Tibial artery (tissue), 4 donors: ENCODE measurements at regions of chr18 and their contacts with region 1.

Region 1: DNA sequence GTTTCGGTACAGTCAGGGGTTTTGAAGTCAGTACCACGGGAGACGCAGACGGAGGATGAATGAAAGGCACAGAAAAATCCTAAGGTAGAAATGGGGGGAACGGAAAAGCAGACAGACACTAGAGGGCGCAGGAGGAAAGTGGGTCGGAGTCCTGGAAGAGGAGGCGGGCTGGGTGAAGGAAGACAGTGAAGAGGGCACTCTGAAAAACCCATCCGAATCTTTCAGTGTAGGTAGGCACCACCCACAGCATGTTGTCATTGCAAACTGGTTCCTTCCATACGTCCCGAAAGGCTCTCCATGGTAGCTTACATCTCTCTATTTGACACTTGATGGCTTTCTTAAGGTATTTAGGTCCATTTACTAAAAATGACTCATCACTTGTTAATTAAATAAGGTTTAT is 18.5 kb upstream of the ZNF236 start:
- DNase-seq: peak; percentile 50 to 71
- H3K4me3 ChIP-seq: no peak overlapping the region
- H3K27ac ChIP-seq: no peak overlapping the region
- H3K4me1 ChIP-seq: peaks cover 0 to 17% (median 15%) of the 10 kb centered on the region in 4 donors
- H3K27me3 ChIP-seq: peaks cover 0 to 7% of the 10 kb centered on the region in 2 donors
- CTCF ChIP-seq: peak; percentile 65 to 77

Region 2: GRCh38 chr18:76565238-76566180 is 238.3 kb before region 1 on chr18:
- intact Hi-C with region 1: no loop called
- DNase-seq: peak; percentile 83 to 89
- H3K4me3 ChIP-seq: peak overlapping the region; percentile 44 to 45
- H3K27ac ChIP-seq: peak overlapping the region; percentile 55 to 68
- H3K4me1 ChIP-seq: peaks cover 0 to 22% (median 10%) of the 10 kb centered on the region in 4 donors
- H3K27me3 ChIP-seq: no peaks in the 10 kb centered on the region
- CTCF ChIP-seq: no peak

Region 3: DNA sequence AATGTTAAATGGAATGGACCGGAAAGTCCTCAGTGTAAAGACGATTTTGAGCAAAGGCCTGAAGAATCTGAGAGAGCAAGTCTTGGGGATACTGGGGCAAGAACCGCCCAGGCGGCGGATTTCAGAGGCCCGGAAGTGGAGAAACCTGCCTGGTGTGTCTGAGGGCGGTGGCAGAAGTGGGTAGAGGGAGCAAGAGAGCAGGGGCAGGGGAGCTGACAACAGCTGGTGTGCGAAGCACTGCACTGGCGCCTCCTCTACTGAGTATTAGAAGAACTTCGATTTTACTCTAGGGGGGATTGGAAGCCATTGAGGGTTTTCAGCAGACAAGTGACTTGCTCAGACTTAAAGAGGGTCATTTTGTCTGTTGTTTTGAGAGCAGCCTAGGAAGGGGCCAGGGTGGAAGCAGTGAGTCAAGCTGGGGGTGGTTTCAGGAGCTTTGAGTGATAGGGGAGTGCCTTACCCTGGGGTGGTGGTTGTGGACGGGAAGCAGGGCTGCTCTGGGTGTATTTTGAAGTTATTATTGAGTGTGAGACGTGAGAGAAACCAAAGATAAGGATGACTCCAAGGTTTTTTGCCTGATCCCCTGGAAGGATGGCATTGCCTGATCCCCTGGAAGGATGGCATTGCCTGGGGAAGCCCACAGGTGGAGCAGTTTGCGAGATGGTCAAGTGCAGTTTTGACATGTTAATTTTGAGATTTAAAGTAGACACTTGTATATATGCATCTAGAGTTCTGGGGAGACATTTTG is 71.0 kb after region 1 on chr18:
- intact Hi-C with region 1: loop called (anchors 5 kb)
- DNase-seq: no peak
- H3K4me3 ChIP-seq: no peak overlapping the region
- H3K27ac ChIP-seq: no peak overlapping the region
- H3K4me1 ChIP-seq: no peaks in the 10 kb centered on the region
- H3K27me3 ChIP-seq: no peaks in the 10 kb centered on the region
- CTCF ChIP-seq: no peak

Region 4: GRCh38 chr18:76982841-76983587 is 179.2 kb after region 1 on chr18:
- intact Hi-C with region 1: loop called (anchors 10 kb)
- DNase-seq: peak; percentile 63 to 81
- H3K4me3 ChIP-seq: no peak overlapping the region
- H3K27ac ChIP-seq: no peak overlapping the region
- H3K4me1 ChIP-seq: peaks cover 0 to 7% (median 0%) of the 10 kb centered on the region in 4 donors
- H3K27me3 ChIP-seq: no peaks in the 10 kb centered on the region
- CTCF ChIP-seq: peak; percentile 73 to 92

Region 5: GRCh38 chr18:77147418-77147852 is 343.6 kb after region 1 on chr18:
- intact Hi-C with region 1: no loop called
- DNase-seq: no peak
- H3K4me3 ChIP-seq: no peak overlapping the region
- H3K27ac ChIP-seq: no peak overlapping the region
- H3K4me1 ChIP-seq: no peaks in the 10 kb centered on the region
- H3K27me3 ChIP-seq: no peaks in the 10 kb centered on the region
- CTCF ChIP-seq: no peak